ENCODE measurements at regions of chr12 and their contacts with region 1.

Region 1: DNA sequence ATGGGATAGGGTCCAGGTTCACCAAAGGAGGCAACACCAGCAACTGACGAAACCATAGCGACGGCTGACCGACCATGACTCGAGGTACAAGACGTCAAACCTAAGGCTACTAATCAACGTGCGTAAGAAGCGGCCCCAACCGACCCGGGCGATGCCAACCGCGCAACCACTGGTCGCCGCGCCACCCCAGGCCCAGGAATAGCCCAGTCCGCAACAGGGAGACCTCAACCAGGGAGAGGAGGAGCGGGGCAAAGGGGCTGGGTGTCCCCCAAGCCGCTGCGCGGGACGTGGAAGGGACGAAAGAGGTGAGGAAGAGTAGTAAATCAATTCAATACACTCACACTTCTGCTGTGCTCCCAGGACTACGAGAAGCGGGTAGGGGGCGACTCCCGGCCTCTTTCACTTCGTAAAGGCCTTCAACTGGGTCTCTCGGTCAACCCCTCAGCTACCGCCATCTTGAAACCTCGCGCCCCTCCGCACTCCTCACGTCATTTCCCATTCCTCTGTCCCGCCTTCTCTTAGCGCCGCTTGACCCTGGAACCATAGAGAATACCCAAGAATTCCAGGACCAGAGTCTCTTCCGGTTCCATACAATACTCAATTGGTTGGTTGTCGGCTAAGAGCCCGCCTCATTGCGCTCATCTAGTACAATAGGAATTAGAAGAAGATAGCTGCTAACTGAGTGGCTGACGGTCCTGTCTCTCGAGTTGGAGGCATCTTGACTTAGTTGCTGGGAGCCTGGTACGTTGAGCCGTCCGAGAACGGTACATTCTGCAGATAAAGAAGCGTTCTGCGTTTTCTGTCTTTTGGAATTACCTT is at the starts of genes C12orf60 and WBP11:
- DNase-seq: peak; percentile 89 to 96 (median 94)
- H3K4me3 ChIP-seq: peak within 1 kb of the TSS; percentile 66 to 89
- H3K4me3 Mint-ChIP-seq: no peak within 1 kb of the TSS
- H3K27ac ChIP-seq: peak within 1 kb of the TSS; percentile 91
- H3K27ac Mint-ChIP-seq: no peak within 1 kb of the TSS
- H3K4me1 ChIP-seq: peaks cover 39% of the 10 kb centered on the region
- H3K4me1 Mint-ChIP-seq: peaks cover 4 to 32% (median 13%) of the 10 kb centered on the region in 4 donors
- H3K27me3 ChIP-seq: no peaks in the 10 kb centered on the region
- H3K27me3 Mint-ChIP-seq: no peaks in the 10 kb centered on the region
- total RNA-seq, gene C12orf60: 1.3 to 1.4 TPM
- total RNA-seq, gene WBP11: 83.7 to 83.8 TPM

Region 2: GRCh38 chr12:14723763-14724162 is 79.5 kb before region 1 on chr12:
- CTCF ChIA-PET with region 1: interaction called, 9 read pairs
- POLR2A ChIA-PET with region 1: no interaction called
- intact Hi-C with region 1: loop called (anchors 5 kb)
- DNase-seq: peak; percentile 49 to 66 (median 62)
- H3K4me3 ChIP-seq: no peak overlapping the region
- H3K4me3 Mint-ChIP-seq: no peak overlapping the region
- H3K27ac ChIP-seq: no peak overlapping the region
- H3K27ac Mint-ChIP-seq: peak overlapping the region in 1 of 7 donors; percentile 15
- H3K4me1 ChIP-seq: no peaks in the 10 kb centered on the region
- H3K4me1 Mint-ChIP-seq: peaks cover 0 to 3% (median 1%) of the 10 kb centered on the region in 4 donors
- H3K27me3 ChIP-seq: no peaks in the 10 kb centered on the region
- H3K27me3 Mint-ChIP-seq: peaks cover 5 to 6% of the 10 kb centered on the region in 2 donors

Region 3: GRCh38 chr12:14884458-14884878 is 81.2 kb after region 1 on chr12:
- CTCF ChIA-PET with region 1: no interaction called
- POLR2A ChIA-PET with region 1: interaction called, 3 read pairs
- intact Hi-C with region 1: loop called (anchors 10 kb)
- DNase-seq: peak; percentile 83 to 89 (median 86)
- H3K4me3 ChIP-seq: no peak overlapping the region
- H3K4me3 Mint-ChIP-seq: peak overlapping the region; percentile 8 to 85 (median 64)
- H3K27ac ChIP-seq: no peak overlapping the region
- H3K27ac Mint-ChIP-seq: peak overlapping the region; percentile 26 to 91 (median 77)
- H3K4me1 ChIP-seq: peaks cover 20% of the 10 kb centered on the region
- H3K4me1 Mint-ChIP-seq: peaks cover 14 to 35% (median 24%) of the 10 kb centered on the region in 4 donors
- H3K27me3 ChIP-seq: no peaks in the 10 kb centered on the region
- H3K27me3 Mint-ChIP-seq: peaks cover 2 to 6% of the 10 kb centered on the region in 2 donors

Region 4: DNA sequence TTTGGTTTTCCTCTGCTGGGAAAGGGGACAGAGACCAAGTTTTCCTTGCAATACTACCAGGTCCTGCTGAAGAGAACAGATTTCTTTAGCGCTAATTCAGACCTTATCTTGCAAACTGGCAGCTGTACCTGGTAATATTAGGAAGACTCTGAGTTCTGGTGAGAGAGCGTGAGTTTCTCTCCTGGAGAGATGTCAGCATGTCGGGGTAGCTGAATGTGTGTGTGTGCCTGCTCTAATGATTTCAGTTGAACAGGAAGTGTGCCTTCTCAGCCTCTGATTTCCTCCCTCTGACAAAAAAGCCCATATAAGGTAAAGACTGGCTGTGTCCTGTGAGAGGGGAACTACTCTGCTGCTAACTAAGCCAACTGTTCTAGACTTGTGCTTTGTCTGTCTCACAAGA is 145.5 kb after region 1 on chr12:
- CTCF ChIA-PET with region 1: no interaction called
- POLR2A ChIA-PET with region 1: interaction called, 8 read pairs
- intact Hi-C with region 1: loop called (anchors 1 kb)
- DNase-seq: peak; percentile 76 to 86 (median 83)
- H3K4me3 ChIP-seq: peak overlapping the region; percentile 20 to 52
- H3K4me3 Mint-ChIP-seq: peak overlapping the region; percentile 73 to 93 (median 84)
- H3K27ac ChIP-seq: peak overlapping the region; percentile 92
- H3K27ac Mint-ChIP-seq: peak overlapping the region; percentile 94 to 100 (median 97)
- H3K4me1 ChIP-seq: peaks cover 91% of the 10 kb centered on the region
- H3K4me1 Mint-ChIP-seq: peaks cover 63 to 92% (median 85%) of the 10 kb centered on the region in 4 donors
- H3K27me3 ChIP-seq: no peaks in the 10 kb centered on the region
- H3K27me3 Mint-ChIP-seq: no peaks in the 10 kb centered on the region

Region 5: GRCh38 chr12:15629108-15629507 is 825.9 kb after region 1 on chr12:
- CTCF ChIA-PET with region 1: no interaction called
- POLR2A ChIA-PET with region 1: no interaction called
- intact Hi-C with region 1: no loop called
- DNase-seq: no peak
- H3K4me3 ChIP-seq: no peak overlapping the region
- H3K4me3 Mint-ChIP-seq: no peak overlapping the region
- H3K27ac ChIP-seq: no peak overlapping the region
- H3K27ac Mint-ChIP-seq: no peak overlapping the region
- H3K4me1 ChIP-seq: no peaks in the 10 kb centered on the region
- H3K4me1 Mint-ChIP-seq: peaks cover 0 to 1% (median 0%) of the 10 kb centered on the region in 4 donors
- H3K27me3 ChIP-seq: no peaks in the 10 kb centered on the region
- H3K27me3 Mint-ChIP-seq: peaks cover 0 to 2% of the 10 kb centered on the region in 2 donors

Region 6: GRCh38 chr12:15882118-15882971 is 1079.1 kb after region 1 on chr12 and contains the start of gene STRAP:
- CTCF ChIA-PET with region 1: no interaction called
- POLR2A ChIA-PET with region 1: no interaction called
- intact Hi-C with region 1: loop called (anchors 1 kb)
- DNase-seq: peak; percentile 96 to 97 (median 97)
- H3K4me3 ChIP-seq: peak within 1 kb of the TSS; percentile 90 to 98
- H3K4me3 Mint-ChIP-seq: peak within 1 kb of the TSS; percentile 96 to 99 (median 98)
- H3K27ac ChIP-seq: peak within 1 kb of the TSS; percentile 95
- H3K27ac Mint-ChIP-seq: peak within 1 kb of the TSS; percentile 99 to 100 (median 100)
- H3K4me1 ChIP-seq: peaks cover 51% of the 10 kb centered on the region
- H3K4me1 Mint-ChIP-seq: peaks cover 38 to 66% (median 53%) of the 10 kb centered on the region in 4 donors
- H3K27me3 ChIP-seq: no peaks in the 10 kb centered on the region
- H3K27me3 Mint-ChIP-seq: no peaks in the 10 kb centered on the region
- total RNA-seq, gene STRAP: 46.1 to 49.1 TPM